Sigmoid colon (tissue), 7 donors: ENCODE measurements at regions of chr16 and their contacts with region 1.

Region 1: DNA sequence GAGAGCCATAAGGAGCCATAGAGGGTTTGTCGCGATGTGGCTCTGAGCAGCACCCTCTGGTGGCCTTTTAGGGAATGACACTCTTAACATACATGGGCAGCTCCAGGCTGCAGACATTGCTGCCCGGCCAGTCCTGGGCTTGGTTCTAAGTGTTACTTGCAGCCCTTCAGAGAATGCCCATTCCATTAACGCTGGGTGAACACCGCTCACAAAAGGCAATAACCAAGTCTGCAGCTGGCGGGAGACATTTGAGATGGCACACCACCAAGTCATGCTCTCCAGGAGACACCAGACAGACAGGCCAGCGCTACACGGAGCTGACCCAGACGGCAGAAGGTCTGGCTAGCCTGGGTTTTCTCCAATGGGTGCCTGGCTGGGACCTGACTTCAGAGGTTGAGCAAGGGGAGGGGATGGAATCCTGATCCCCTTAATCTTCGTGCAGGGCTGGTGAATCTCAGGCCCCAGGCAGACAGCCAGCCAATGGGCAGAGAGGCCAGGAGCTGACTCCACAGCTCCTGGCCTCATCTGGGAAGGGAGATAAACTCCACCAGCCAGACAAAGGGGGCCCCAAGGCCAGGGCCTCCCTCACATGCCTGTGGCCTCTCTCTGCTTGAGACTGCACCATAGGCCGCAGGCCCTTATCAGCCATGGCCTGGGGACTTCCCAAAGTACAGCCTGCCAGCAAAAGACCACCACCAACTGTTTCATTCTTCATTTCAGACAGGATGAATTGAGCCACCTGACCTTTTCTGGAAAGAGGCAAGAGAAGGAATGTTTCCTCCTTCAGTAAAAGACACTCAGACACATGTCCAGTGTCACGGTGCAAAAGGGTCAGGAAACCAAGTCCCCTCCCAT is 58.8 kb downstream of the ZDHHC7 start:
- DNase-seq: peak; percentile 93
- H3K4me3 ChIP-seq: no peak overlapping the region
- H3K27ac ChIP-seq: peak overlapping the region; percentile 22 to 86 (median 76)
- H3K4me1 ChIP-seq: peaks cover 0 to 42% (median 24%) of the 10 kb centered on the region in 4 donors
- H3K27me3 ChIP-seq: no peaks in the 10 kb centered on the region
- CTCF ChIP-seq: peak; percentile 77 to 96 (median 92)
- EP300 ChIP-seq: peak in 2 of 4 donors; percentile 37 to 86
- POLR2A ChIP-seq: no peak

Region 2: DNA sequence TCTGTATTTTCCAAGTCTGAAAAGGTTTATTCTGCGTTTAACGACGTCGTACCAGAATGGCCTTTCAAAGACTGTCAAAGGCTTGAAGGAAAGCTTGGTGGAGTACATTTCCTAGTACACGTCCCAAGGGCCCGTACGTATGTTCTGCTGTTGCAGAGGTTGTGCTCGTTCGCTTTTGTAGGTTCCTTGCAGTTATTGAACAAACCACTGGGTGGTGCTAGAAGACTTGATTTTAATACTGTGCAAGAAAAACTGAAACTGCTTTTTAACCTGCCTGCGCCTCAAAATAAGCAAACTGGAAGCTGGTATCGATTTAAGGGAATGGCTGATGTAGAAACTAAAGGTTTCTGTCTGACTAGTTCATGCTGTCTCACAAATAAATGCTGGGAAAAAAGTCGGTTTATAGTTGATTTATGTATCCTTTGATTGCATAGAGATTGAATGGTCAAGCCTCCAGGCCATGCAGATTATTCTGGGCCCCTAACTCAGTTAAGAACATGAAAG is 198.2 kb before region 1 on chr16:
- intact Hi-C with region 1: loop called (anchors 1 kb)
- DNase-seq: peak; percentile 85
- H3K4me3 ChIP-seq: peak overlapping the region in 1 of 4 donors; percentile 9
- H3K27ac ChIP-seq: peak overlapping the region; percentile 6 to 32 (median 14)
- H3K4me1 ChIP-seq: peaks cover 0 to 75% (median 38%) of the 10 kb centered on the region in 4 donors
- H3K27me3 ChIP-seq: no peaks in the 10 kb centered on the region
- CTCF ChIP-seq: peak; percentile 74 to 93 (median 90)
- EP300 ChIP-seq: no peak
- POLR2A ChIP-seq: no peak

Region 3: DNA sequence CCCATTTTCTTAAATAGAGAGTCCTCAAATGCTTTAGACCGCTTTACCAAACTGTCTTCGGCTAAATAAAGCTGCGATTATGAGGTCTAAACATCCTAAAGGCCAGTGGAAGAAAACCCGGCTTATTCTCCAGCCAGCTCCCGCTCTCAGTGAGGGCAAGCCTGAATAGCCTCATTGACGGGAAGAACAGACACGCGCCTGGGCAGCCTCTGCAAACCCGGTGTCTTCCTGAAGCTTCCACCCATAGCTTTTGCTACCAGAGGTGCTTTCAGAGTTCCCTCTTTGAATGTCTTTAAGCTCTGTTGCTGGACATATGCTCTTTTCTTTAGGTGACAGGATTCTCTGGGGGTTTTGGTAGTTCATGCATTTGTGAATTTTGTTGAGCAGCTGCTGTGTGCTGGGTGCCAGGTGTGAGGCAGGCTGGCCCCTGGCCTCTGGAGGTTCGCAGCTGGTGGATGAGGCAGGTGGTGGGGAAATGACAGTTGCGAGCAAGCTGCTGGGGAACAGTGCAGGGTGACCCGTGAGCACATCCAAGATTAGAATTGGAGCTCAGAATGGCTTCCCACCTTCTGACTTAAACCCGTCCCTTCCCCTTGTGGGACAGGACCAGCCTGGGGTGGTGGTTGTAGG is 88.1 kb before region 1 on chr16:
- intact Hi-C with region 1: loop called (anchors 10 kb)
- DNase-seq: no peak
- H3K4me3 ChIP-seq: no peak overlapping the region
- H3K27ac ChIP-seq: peak overlapping the region in 2 of 4 donors; percentile 45 to 49
- H3K4me1 ChIP-seq: peaks cover 0 to 23% (median 0%) of the 10 kb centered on the region in 4 donors
- H3K27me3 ChIP-seq: no peaks in the 10 kb centered on the region
- CTCF ChIP-seq: no peak
- EP300 ChIP-seq: no peak
- POLR2A ChIP-seq: no peak

Region 4: GRCh38 chr16:84898447-84898846 is 54.1 kb before region 1 on chr16:
- intact Hi-C with region 1: no loop called
- DNase-seq: no peak
- H3K4me3 ChIP-seq: no peak overlapping the region
- H3K27ac ChIP-seq: peak overlapping the region; percentile 7 to 42 (median 28)
- H3K4me1 ChIP-seq: no peaks in the 10 kb centered on the region
- H3K27me3 ChIP-seq: no peaks in the 10 kb centered on the region
- CTCF ChIP-seq: no peak
- EP300 ChIP-seq: no peak
- POLR2A ChIP-seq: no peak